Ascending aorta (tissue), 2 donors: ENCODE measurements at regions of chr6 and their contacts with region 1.

Region 1: DNA sequence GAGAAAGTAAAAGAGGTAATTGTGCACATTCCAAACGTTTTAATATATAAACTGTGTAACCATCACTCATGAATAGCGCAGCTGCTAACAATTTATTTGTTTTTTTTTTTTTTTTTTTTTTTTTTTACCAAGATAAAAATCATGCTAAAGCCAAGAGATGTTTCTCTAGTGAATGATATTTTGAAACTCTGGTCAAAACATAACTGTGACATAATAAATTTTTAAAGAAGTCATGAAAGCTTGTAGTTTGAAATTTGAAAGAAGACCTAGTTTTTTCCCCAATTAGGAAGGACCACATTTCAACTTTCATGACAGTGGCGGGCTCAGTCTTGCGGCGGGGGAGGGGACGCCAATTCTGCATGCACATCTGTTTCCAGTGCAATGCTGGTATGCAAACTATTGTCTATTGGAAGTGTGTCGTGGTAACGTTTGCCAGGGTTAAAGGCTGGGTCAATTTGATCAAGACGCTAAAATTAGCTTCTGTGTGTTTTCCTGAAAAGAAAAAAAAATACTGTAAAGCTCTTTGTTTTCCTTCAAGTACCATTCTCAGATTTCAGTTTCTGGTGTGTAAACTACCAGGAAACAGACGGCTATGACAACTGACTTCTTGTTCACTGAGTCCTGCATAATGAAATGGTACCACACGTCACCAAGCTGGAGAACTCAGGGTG is 211.9 kb downstream of the FOXC1 start:
- DNase-seq: no peak
- H3K4me3 ChIP-seq: peak overlapping the region; percentile 18 to 63
- H3K27ac ChIP-seq: peak overlapping the region; percentile 84 to 86
- H3K4me1 ChIP-seq: peaks cover 0 to 17% of the 10 kb centered on the region in 2 donors
- H3K27me3 ChIP-seq: no peaks in the 10 kb centered on the region
- CTCF ChIP-seq: no peak

Region 2: DNA sequence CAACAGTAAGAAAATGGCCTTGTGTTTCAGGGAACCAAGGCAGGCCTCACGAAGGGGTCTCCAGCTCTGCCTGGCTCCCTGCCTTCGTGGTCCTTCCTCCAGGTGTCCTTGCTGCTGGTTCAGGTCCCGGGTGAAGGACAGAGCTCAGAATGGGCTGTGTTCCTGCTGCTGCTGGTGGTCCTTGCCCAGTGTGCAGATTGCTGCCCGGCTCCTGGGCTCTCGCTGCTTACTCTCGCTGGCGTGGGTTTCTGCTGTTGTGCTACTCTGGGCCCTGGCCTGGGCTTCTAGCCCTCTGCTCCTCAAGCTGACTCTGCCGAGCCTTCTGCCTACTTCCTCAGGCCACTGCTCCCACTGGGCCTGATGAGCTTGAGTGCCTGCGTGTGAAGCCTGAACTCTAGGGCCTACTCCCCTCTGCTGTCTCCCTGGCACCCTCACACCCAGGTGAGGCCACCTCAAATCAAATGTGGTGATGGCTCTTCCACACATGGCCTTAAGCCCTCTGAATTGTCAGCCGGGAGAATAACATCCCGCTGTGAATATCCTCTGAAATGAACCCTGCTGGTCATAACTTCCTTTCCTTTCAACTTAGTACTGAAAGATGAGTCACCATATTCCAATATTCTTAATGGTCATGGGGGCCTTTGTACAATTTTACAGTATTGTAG is 40.4 kb before region 1 on chr6:
- intact Hi-C with region 1: loop called (anchors 5 kb)
- DNase-seq: no peak
- H3K4me3 ChIP-seq: no peak overlapping the region
- H3K27ac ChIP-seq: peak overlapping the region; percentile 58 to 65
- H3K4me1 ChIP-seq: peaks cover 6 to 24% of the 10 kb centered on the region in 2 donors
- H3K27me3 ChIP-seq: no peaks in the 10 kb centered on the region
- CTCF ChIP-seq: no peak

Region 3: GRCh38 chr6:1868561-1869261 is 47.1 kb after region 1 on chr6:
- intact Hi-C with region 1: loop called (anchors 5 kb)
- DNase-seq: no peak
- H3K4me3 ChIP-seq: no peak overlapping the region
- H3K27ac ChIP-seq: peak overlapping the region; percentile 82 to 85
- H3K4me1 ChIP-seq: peaks cover 4 to 22% of the 10 kb centered on the region in 2 donors
- H3K27me3 ChIP-seq: no peaks in the 10 kb centered on the region
- CTCF ChIP-seq: no peak